ENCODE measurements at regions of chr12 and their contacts with region 1.

Region 1: DNA sequence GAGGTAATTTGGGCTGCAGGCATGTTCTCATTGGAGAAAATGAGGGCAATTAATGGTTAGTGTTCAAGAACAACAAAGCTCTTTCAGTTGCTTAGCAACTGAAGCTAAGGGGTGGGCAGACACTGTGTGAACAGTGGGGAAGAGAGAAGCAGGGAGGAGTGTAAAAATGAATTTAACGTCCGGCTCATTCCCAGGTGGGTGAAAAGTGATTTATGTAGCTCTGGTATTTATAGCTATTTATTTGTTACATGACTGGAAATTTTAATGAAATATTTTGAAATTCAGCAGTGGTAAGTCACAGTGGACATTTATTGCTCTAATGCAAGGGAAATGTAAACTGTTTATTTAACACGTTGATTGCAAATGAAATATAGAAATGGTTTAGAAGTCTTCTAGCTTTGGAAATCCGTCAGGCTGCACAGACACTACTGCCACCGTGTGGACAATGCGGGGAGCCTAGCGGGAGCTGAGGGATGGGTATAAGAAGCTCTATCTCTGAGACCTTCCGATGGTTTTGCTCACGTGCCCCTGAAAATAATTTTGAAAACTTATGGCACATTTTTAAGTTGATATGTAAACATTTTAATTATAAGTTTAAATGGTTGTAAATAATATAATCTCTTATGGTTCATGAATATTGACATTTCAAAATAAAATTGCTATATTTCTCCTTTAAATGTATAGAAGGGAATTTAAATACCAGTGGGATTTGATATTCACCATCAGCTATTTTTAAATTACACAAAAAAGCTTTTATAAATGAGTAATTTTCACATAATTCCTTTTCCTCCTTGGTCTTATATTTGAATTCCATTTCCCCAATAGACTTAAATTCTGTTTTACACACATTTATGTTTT is 54.4 kb downstream of the E2F7 start:
- DNase-seq: peak; percentile 45
- H3K4me3 Mint-ChIP-seq: no peak overlapping the region
- H3K27ac Mint-ChIP-seq: no peak overlapping the region
- H3K4me1 Mint-ChIP-seq: peaks cover 3% of the 10 kb centered on the region
- H3K27me3 Mint-ChIP-seq: peaks cover 13% of the 10 kb centered on the region

Region 2: GRCh38 chr12:76878899-76879709 is 131.8 kb before region 1 on chr12 and contains the start of gene CSRP2:
- intact Hi-C with region 1: loop called (anchors 10 kb)
- DNase-seq: peak; percentile 47
- H3K4me3 Mint-ChIP-seq: peak within 1 kb of the TSS; percentile 89
- H3K27ac Mint-ChIP-seq: no peak within 1 kb of the TSS
- H3K4me1 Mint-ChIP-seq: peaks cover 3% of the 10 kb centered on the region
- H3K27me3 Mint-ChIP-seq: peaks cover 62% of the 10 kb centered on the region
- total RNA-seq, gene CSRP2: 0.84 and 3.5 TPM in 2 replicates

Region 3: GRCh38 chr12:77339610-77340009 is 328.7 kb after region 1 on chr12:
- intact Hi-C with region 1: no loop called
- DNase-seq: no peak
- H3K4me3 Mint-ChIP-seq: no peak overlapping the region
- H3K27ac Mint-ChIP-seq: no peak overlapping the region
- H3K4me1 Mint-ChIP-seq: no peaks in the 10 kb centered on the region
- H3K27me3 Mint-ChIP-seq: no peaks in the 10 kb centered on the region

Measured in activated T-helper 2 cell treated with anti-CD3 and anti-CD28 coated beads, Interferon-gamma antibody, Interleukin-2, Interleukin-4, amounts not matched to agents 10 μg/mL and 5 μg/mL and 100 μg/mL, durations not matched to agents 14 hours and 24 hours and 36 hours (primary cell).